ENCODE measurements at regions of chr1 and their contacts with region 1.

Region 1: DNA sequence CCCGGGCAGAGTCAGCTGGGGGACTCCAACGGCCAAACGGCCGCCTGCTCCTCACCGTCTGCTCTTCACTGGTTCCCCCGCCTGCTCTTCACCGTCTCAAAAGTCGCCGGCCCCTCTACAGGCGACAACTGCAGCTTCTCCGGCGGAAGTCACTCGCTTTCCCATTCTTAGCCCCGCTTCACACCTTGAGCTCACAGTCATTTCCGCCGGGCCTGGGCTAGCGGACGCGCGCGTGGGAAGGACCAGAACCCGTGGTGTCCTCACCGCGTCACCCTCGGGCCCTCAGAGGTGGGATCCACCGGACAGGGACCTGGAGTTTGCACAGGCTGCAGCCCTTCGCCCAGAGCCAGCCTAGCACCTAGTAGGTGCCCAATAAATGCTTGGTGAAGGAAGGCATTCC is 27.9 kb upstream of the HJV start:
- DNase-seq: no peak
- H3K4me3 Mint-ChIP-seq: no peak overlapping the region
- H3K27ac Mint-ChIP-seq: no peak overlapping the region
- H3K4me1 Mint-ChIP-seq: peaks cover 16% of the 10 kb centered on the region
- H3K27me3 Mint-ChIP-seq: no peaks in the 10 kb centered on the region

Region 2: GRCh38 chr1:146019231-146020057 is 30.0 kb before region 1 on chr1:
- intact Hi-C with region 1: loop called (anchors 5 kb)
- DNase-seq: no peak
- H3K4me3 Mint-ChIP-seq: no peak overlapping the region
- H3K27ac Mint-ChIP-seq: no peak overlapping the region
- H3K4me1 Mint-ChIP-seq: peaks cover 5% of the 10 kb centered on the region
- H3K27me3 Mint-ChIP-seq: peaks cover 71% of the 10 kb centered on the region

Measured in activated T-helper 2 cell treated with anti-CD3 and anti-CD28 coated beads, Interferon-gamma antibody, Interleukin-2, Interleukin-4, amounts not matched to agents 10 μg/mL and 5 μg/mL and 100 μg/mL, durations not matched to agents 14 hours and 24 hours and 36 hours (primary cell).